ENCODE measurements at regions of chr1 and their contacts with region 1.

Region 1: GRCh38 chr1:248622570-248623001 is 12.3 kb downstream of the OR2T11 start:
- DNase-seq: no peak
- H3K4me3 ChIP-seq: no peak overlapping the region
- H3K27ac ChIP-seq: no peak overlapping the region
- H3K4me1 ChIP-seq: no peaks in the 10 kb centered on the region
- H3K27me3 ChIP-seq: no peaks in the 10 kb centered on the region
- CTCF ChIP-seq: peak; percentile 50 to 78 (median 54)
- POLR2A ChIP-seq: no peak

Region 2: GRCh38 chr1:248373761-248374160 is 248.8 kb before region 1 on chr1:
- intact Hi-C with region 1: no loop called
- DNase-seq: no peak
- H3K4me3 ChIP-seq: no peak overlapping the region
- H3K27ac ChIP-seq: no peak overlapping the region
- H3K4me1 ChIP-seq: no peaks in the 10 kb centered on the region
- H3K27me3 ChIP-seq: no peaks in the 10 kb centered on the region
- CTCF ChIP-seq: no peak
- POLR2A ChIP-seq: no peak

Region 3: DNA sequence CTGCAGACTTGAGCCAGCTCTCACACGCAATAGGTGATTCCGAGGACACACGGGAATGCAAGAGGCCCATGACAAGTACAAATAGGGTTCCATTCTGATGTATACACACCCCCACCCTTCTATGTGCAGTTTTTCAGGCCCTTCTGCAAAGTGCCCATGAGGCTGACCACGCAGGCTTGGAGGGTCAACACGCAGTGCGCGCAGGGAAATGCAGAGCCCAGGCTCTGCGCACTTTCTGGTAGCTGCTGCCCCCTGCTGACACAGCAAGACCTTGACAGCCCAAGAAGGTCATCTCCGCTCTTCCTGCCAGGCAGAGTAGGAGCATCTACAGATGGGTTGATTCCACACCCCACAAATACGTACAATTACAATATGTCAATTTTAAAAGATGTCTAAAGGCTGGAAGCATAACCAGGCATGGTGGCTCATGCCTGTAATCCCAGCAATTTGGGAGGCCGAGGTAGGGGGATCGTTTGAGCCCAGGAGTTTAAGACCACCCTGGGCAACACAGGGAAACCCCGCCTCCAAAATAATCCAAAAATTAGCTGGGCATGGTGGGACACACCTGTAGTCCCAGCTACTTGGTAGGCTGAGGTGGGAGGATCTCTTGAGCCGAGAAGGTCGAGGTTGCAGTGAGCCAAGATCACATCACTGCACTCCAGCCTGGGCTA is 184.6 kb after region 1 on chr1:
- intact Hi-C with region 1: loop called (anchors 2 kb)
- DNase-seq: no peak
- H3K4me3 ChIP-seq: no peak overlapping the region
- H3K27ac ChIP-seq: no peak overlapping the region
- H3K4me1 ChIP-seq: no peaks in the 10 kb centered on the region
- H3K27me3 ChIP-seq: no peaks in the 10 kb centered on the region
- CTCF ChIP-seq: peak; percentile 51 to 87 (median 64)
- POLR2A ChIP-seq: no peak